Natural killer cell (primary cell): ENCODE measurements at regions of chr11 and their contacts with region 1.

Region 1: GRCh38 chr11:126268708-126269579 is at the starts of genes FOXRED1 and SRPRA:
- DNase-seq: peak; percentile 99 to 100
- ATAC-seq: peak; percentile 97 to 100 (median 98)
- H3K4me3 ChIP-seq: peak within 1 kb of the TSS; percentile 91
- H3K4me3 Mint-ChIP-seq: peak within 1 kb of the TSS; percentile 99
- H3K27ac ChIP-seq: peak within 1 kb of the TSS; percentile 90
- H3K27ac Mint-ChIP-seq: peak within 1 kb of the TSS; percentile 95 to 96
- H3K4me1 ChIP-seq: peaks cover 16% of the 10 kb centered on the region
- H3K4me1 Mint-ChIP-seq: peaks cover 34 to 48% of the 10 kb centered on the region in 2 donors
- H3K27me3 ChIP-seq: no peaks in the 10 kb centered on the region
- H3K27me3 Mint-ChIP-seq: no peaks in the 10 kb centered on the region
- CTCF ChIP-seq: no peak
- total RNA-seq, gene FOXRED1: 31.1 to 37.9 (median 31.3) TPM
- total RNA-seq, gene SRPRA: 188 to 225 (median 195) TPM

Region 2: DNA sequence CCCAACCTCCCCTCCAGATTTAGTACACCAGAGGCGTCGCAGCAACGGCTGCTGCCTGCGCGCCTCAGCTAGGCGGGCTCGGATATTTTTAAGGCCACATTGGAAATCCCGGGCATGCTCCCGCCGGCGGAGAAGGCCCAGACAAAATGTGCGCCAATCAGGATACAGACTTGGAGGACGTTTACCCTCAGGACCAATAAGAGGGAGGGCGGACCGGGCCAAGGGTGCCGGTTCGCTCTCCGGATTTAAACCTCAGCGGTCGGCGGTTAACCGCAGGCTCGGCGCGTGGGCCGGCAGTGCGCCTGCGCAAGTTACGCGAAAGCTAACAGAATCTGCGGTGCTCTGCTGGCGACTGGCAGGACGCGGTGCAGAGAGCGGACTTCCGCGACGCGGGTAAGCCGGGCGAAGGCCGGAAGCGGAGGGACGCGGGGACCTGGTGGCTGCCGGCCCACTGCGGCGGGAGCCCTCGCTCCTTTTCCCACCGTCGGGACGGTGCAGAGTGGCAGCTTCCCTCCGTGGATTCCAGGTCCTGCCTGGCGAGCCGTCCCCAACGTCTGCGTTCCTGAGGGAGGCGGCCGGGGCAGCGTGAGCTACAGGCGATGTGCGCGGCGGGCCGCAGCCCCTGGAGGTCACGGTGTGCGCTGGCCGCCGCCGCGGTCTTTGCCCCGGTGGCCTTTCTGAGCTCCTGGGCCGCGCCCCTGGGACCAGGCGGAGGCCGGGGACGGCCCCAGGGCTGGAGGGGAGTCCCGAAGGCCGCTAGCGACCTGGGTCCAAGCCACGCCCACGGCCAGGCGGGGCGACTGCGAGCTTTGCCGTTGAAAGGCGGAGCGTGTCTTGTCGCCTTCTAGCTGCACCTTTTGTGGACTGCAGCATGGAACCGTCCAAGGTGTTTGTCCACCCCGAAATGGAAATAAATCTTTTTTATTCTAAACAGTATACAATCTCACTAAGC is 381.3 kb before region 1 on chr11 and contains the start of gene HYLS1:
- intact Hi-C with region 1: loop called (anchors 5 kb)
- DNase-seq: peak; percentile 98
- ATAC-seq: peak; percentile 75 to 91 (median 85)
- H3K4me3 ChIP-seq: peak within 1 kb of the TSS; percentile 90
- H3K4me3 Mint-ChIP-seq: peak within 1 kb of the TSS; percentile 96
- H3K27ac ChIP-seq: peak within 1 kb of the TSS; percentile 95
- H3K27ac Mint-ChIP-seq: peak within 1 kb of the TSS; percentile 94 to 97
- H3K4me1 ChIP-seq: peaks cover 15% of the 10 kb centered on the region
- H3K4me1 Mint-ChIP-seq: peaks cover 17 to 22% of the 10 kb centered on the region in 2 donors
- H3K27me3 ChIP-seq: no peaks in the 10 kb centered on the region
- H3K27me3 Mint-ChIP-seq: peaks cover 0 to 4% of the 10 kb centered on the region in 2 donors
- CTCF ChIP-seq: no peak
- total RNA-seq, gene HYLS1: 4.4 to 6.8 (median 5.6) TPM

Region 3: DNA sequence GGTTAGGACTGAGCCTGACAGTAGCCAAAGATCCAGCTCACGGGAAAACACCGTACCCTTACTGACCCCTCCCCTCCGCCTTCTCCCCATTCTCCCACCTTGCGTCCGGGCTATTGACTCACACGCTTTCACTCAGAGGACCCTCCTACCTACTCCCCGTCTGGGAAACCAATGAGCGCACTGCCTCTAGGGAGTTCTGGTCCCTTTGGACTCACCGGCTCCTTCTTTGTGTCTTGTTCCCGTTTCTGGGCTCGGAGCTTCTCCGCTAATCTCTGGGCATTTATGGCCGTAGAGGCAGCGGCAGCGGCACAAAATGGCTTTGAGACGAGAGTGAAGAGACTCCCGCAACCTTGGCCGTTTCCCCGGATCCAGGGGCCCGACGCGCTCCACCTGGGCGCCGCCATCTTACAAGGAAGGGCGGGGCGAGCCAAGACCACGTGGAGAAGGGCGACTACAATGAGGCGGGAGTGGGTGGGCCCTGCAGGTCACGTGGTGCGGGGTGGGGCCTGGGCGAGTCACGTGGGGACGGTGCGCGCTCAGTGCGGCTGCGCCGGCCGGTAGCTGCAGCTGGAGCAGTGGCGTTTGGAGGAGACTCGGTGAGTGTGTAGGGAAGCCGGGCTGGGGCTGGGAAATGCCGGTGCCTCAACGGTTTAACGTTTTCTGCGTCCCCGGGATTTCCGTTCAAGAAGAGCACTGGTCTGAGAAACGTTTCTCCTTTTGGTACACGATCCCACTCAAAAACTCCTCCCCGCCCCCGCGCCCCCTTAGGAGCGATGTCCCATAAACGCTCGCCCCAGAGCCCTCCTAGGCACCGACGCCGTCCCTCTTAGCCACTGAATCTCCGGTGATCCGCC is 57.5 kb before region 1 on chr11 and contains the starts of genes FAM118B and RPUSD4:
- intact Hi-C with region 1: loop called (anchors 1 kb)
- DNase-seq: peak; percentile 98 to 100
- ATAC-seq: peak; percentile 95 to 99 (median 99)
- H3K4me3 ChIP-seq: peak within 1 kb of the TSS; percentile 75
- H3K4me3 Mint-ChIP-seq: peak within 1 kb of the TSS; percentile 100
- H3K27ac ChIP-seq: peak within 1 kb of the TSS; percentile 52
- H3K27ac Mint-ChIP-seq: peak within 1 kb of the TSS; percentile 94
- H3K4me1 ChIP-seq: peaks cover 15% of the 10 kb centered on the region
- H3K4me1 Mint-ChIP-seq: peaks cover 33 to 36% of the 10 kb centered on the region in 2 donors
- H3K27me3 ChIP-seq: no peaks in the 10 kb centered on the region
- H3K27me3 Mint-ChIP-seq: no peaks in the 10 kb centered on the region
- CTCF ChIP-seq: no peak
- total RNA-seq, gene FAM118B: 5.4 to 9.7 (median 7.8) TPM
- total RNA-seq, gene RPUSD4: 27.1 to 41.7 (median 38.9) TPM

Region 4: DNA sequence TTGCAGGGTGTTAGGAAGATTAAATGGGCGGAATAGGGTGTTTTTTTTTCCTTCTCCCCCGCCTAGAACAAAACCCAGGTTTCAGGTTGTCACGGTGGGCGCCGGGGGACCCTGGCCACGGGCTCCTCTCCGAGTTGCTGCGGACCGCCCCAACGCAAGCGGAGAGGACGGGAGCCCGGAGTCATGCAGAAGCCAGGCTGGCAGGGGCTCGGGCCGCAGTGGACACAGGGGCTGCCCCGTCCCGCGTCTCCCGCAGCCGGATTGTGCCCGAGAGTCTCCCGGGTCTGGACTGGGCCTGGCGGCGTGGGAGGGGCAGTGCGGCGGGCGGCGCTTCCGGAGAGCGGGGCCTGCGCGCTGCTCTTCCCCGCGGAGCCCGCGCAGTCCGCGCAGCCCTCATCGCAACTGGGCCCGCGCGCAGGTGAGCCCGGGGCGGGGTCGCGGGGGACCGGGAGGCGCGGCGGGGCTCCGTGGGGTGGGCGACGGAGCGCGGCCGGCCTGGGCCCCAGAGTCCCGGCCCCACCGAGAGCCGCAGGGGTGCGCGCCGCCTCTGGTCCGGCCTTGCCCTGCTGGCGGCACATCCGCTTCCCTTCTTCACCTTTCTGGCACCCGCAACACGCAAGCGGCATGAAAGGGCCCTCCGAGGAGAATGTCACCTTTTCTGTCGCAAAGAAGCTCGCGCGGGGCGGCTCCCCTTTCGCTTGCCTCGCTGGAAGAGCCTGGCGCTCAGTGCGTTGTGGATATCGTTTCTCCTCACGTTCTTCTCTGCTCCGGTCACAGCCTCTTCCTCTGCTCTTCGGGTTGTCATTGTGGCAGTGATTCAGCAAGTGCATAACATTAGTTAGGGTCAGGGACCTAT is 14.0 kb after region 1 on chr11 and contains the start of gene TIRAP:
- intact Hi-C with region 1: loop called (anchors 2 kb)
- DNase-seq: peak; percentile 53 to 81
- ATAC-seq: peak; percentile 80 to 82 (median 81)
- H3K4me3 ChIP-seq: peak within 1 kb of the TSS; percentile 89
- H3K4me3 Mint-ChIP-seq: peak within 1 kb of the TSS; percentile 99
- H3K27ac ChIP-seq: peak within 1 kb of the TSS; percentile 90
- H3K27ac Mint-ChIP-seq: peak within 1 kb of the TSS; percentile 95 to 96
- H3K4me1 ChIP-seq: peaks cover 37% of the 10 kb centered on the region
- H3K4me1 Mint-ChIP-seq: peaks cover 24 to 39% of the 10 kb centered on the region in 2 donors
- H3K27me3 ChIP-seq: no peaks in the 10 kb centered on the region
- H3K27me3 Mint-ChIP-seq: no peaks in the 10 kb centered on the region
- CTCF ChIP-seq: no peak
- total RNA-seq, gene TIRAP: 14.5 to 24.0 (median 19.5) TPM

Region 5: DNA sequence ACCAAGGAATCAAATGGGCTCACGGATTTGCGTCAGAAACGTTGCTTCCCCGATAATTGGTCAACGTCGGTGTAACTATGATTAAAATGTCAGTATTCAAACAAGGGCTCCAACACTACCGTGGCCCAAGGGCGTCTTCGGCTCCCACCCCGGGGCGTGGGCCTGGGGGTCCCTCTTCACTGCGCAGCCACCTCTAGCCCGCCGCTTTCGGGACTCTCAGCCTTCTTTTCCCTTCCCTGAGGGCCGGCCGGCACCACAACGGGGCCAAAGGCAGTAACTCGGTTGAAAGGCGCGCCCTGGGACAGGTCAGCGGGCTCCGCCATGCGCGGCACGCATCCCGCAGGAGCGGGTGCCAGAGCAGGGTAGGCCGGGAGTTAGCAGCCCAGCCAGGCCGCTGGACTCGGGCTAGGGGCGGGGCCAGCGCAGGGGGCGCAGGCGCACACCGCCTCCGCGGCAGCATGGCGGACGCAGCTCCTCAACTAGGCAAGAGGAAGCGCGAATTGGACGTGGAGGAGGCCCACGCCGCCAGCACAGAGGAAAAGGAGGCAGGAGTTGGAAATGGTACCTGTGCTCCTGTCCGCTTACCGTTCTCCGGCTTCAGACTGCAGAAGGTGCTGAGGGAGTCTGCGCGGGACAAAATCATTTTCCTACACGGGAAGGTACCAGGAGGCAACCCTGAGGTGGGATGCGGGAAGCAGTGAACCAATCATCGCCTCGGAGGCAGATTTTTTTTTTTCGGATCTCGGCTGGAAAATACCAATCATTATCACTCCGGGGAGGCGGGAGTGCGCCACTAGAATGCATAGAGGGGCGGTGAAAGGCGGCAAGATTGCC is 34.9 kb after region 1 on chr11 and contains the start of gene DCPS:
- intact Hi-C with region 1: loop called (anchors 1 kb)
- DNase-seq: peak; percentile 88 to 92
- ATAC-seq: peak; percentile 99
- H3K4me3 ChIP-seq: peak within 1 kb of the TSS; percentile 69
- H3K4me3 Mint-ChIP-seq: peak within 1 kb of the TSS; percentile 96
- H3K27ac ChIP-seq: peak within 1 kb of the TSS; percentile 81
- H3K27ac Mint-ChIP-seq: peak within 1 kb of the TSS; percentile 90 to 94
- H3K4me1 ChIP-seq: peaks cover 26% of the 10 kb centered on the region
- H3K4me1 Mint-ChIP-seq: peaks cover 29 to 33% of the 10 kb centered on the region in 2 donors
- H3K27me3 ChIP-seq: no peaks in the 10 kb centered on the region
- H3K27me3 Mint-ChIP-seq: no peaks in the 10 kb centered on the region
- CTCF ChIP-seq: no peak
- total RNA-seq, gene DCPS: 20.1 to 25.8 (median 23.1) TPM